Activated CD4-positive, alpha-beta memory T cell treated with anti-CD3 and anti-CD28 coated beads for 36 hours (primary cell): ENCODE measurements at regions of chr2 and their contacts with region 1.

Region 1: DNA sequence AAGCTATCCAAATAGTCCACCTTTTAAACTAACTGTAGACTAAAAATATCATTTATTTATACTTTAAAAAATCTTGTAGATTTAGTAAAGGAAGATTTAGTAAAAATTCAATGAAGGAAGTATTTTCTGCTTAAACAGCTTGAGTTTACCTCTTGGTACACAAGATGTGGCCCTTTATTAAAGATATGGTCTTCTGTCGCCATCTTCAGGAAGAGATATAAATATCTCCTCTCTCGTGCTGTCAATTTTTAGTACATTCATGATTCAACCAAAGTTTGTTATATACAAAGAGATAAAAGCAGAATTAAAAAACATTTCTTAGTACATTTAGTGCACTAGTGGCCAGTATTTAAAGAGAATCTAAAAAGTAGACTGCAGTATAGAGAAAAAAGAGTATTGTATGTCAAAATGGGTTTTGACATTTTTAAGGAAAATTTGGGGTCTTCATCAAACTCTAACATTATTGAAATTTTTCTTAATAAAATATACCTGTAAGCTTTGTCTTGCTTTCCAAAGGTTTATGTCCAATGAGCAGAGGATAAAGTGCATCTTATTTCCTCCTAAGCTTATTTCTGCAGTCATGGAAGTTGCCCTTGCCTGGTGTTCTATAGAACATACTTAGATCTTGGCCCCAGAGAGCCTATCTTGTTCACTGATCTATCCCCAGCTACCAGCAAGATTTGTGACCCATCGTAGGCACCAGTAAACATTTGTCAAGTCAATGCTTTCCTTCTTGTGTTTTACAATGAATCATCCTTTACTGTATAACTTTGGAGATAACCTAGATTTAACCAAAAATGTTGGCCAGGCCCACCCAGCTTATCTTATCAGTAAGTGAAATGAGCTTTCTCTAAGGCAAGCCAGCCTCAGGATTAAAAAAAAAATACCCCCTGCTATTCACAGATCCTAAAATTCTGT is 18.5 kb upstream of the EML6 start:
- DNase-seq: no peak
- H3K4me3 Mint-ChIP-seq: no peak overlapping the region
- H3K27ac Mint-ChIP-seq: no peak overlapping the region
- H3K4me1 Mint-ChIP-seq: peaks cover 6% of the 10 kb centered on the region
- H3K27me3 Mint-ChIP-seq: peaks cover 19% of the 10 kb centered on the region

Region 2: GRCh38 chr2:54503192-54503591 is 201.8 kb before region 1 on chr2:
- CTCF ChIA-PET with region 1: interaction called, 15 read pairs
- POLR2A ChIA-PET with region 1: no interaction called
- intact Hi-C with region 1: no loop called
- DNase-seq: peak; percentile 50
- H3K4me3 Mint-ChIP-seq: no peak overlapping the region
- H3K27ac Mint-ChIP-seq: no peak overlapping the region
- H3K4me1 Mint-ChIP-seq: no peaks in the 10 kb centered on the region
- H3K27me3 Mint-ChIP-seq: no peaks in the 10 kb centered on the region

Region 3: GRCh38 chr2:54665436-54665856 is 39.5 kb before region 1 on chr2:
- CTCF ChIA-PET with region 1: interaction called, 228 read pairs
- POLR2A ChIA-PET with region 1: interaction called, 5 read pairs
- intact Hi-C with region 1: loop called (anchors 1 kb)
- DNase-seq: peak; percentile 53
- H3K4me3 Mint-ChIP-seq: no peak overlapping the region
- H3K27ac Mint-ChIP-seq: no peak overlapping the region
- H3K4me1 Mint-ChIP-seq: peaks cover 2% of the 10 kb centered on the region
- H3K27me3 Mint-ChIP-seq: no peaks in the 10 kb centered on the region

Region 4: GRCh38 chr2:54691445-54692135 is 13.4 kb before region 1 on chr2:
- CTCF ChIA-PET with region 1: interaction called, 19 read pairs
- POLR2A ChIA-PET with region 1: no interaction called
- intact Hi-C with region 1: no loop called
- DNase-seq: no peak
- H3K4me3 Mint-ChIP-seq: no peak overlapping the region
- H3K27ac Mint-ChIP-seq: no peak overlapping the region
- H3K4me1 Mint-ChIP-seq: peaks cover 5% of the 10 kb centered on the region
- H3K27me3 Mint-ChIP-seq: peaks cover 18% of the 10 kb centered on the region